Vagina (tissue), 2 donors: ENCODE measurements at regions of chr1 and their contacts with region 1.

Region 1: GRCh38 chr1:240967070-240967724 is 355.2 kb upstream of the GREM2 start:
- DNase-seq: no peak
- H3K4me3 ChIP-seq: no peak overlapping the region
- H3K27ac ChIP-seq: no peak overlapping the region
- H3K4me1 ChIP-seq: no peaks in the 10 kb centered on the region
- H3K27me3 ChIP-seq: no peaks in the 10 kb centered on the region
- CTCF ChIP-seq: no peak
- POLR2A ChIP-seq: no peak

Region 2: DNA sequence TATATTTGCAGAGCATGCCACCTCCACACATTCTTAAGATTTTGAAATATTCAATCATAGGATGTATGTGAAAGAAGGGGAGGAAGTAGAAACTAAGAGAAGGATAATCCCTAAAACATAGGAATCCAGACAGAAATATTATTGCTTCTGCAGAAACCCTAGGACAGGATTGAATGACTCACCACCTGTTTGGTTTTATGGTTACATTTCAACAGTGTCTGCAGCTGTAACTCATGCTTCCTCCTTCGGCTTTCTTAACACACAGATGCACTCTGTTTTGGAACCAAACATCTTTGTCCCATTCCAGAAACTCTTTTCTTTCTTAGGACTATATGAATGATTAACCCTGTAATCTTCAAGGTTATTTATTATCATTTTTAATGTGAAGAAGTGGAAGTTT is 369.1 kb after region 1 on chr1:
- intact Hi-C with region 1: no loop called
- DNase-seq: no peak
- H3K4me3 ChIP-seq: no peak overlapping the region
- H3K27ac ChIP-seq: no peak overlapping the region
- H3K4me1 ChIP-seq: no peaks in the 10 kb centered on the region
- H3K27me3 ChIP-seq: no peaks in the 10 kb centered on the region
- CTCF ChIP-seq: no peak
- POLR2A ChIP-seq: no peak

Region 3: GRCh38 chr1:241782396-241782795 is 815.2 kb after region 1 on chr1:
- intact Hi-C with region 1: loop called (anchors 10 kb)
- DNase-seq: no peak
- H3K4me3 ChIP-seq: no peak overlapping the region
- H3K27ac ChIP-seq: no peak overlapping the region
- H3K4me1 ChIP-seq: no peaks in the 10 kb centered on the region
- H3K27me3 ChIP-seq: no peaks in the 10 kb centered on the region
- CTCF ChIP-seq: no peak
- POLR2A ChIP-seq: no peak